BJ (cell line): ENCODE measurements at regions of chr11 and their contacts with region 1.

Region 1: GRCh38 chr11:47373876-47374720 is 4.2 kb downstream of the SPI1 start:
- DNase-seq: no peak
- H3K4me3 ChIP-seq: no peak overlapping the region
- H3K27me3 ChIP-seq: no peaks in the 10 kb centered on the region
- CTCF ChIP-seq: peak; percentile 97

Region 2: DNA sequence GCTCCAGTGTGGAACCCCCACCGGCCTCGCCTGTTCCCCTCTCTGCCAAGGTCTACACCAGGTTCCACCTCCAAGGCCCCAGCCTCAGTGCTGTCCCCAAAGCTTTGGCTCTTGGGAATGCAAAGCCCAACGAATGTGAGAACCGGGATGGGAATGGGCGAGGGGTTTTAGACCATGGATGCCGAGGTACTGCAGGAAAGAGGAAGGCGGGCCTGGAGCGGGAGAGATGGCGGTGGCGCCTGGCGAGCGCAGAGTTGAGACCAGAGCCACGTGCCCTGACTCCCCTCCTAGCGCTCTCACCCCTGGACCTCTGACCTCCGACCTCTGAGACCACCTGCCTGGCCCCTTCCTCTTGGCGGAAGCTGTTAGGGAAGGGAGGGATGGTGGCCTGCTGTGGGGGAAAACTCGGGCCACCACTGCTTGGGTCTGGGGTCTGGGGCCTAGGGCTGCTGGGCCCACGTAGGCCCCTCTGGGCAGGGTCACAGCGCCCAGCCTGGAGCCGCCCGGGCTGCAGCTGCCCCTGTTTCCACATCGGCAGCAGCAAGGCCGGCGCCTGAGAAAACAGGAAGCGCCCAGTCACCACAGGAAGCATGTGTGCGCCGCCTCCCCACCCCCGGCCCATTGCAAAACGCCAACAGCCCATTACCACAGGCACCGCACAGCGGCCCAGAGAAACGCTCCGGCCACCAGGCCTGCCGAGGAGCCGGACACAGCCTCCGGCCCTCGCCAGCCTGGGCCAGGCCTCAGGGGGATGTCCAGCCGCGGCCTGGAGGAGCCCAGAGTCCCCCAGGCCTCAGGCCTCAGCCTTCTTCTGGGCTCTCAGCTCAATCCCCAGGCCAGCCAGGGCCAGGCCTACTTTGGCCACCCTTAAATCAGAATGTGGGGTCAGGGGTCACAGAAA is 20.5 kb after region 1 on chr11:
- CTCF ChIA-PET with region 1: interaction called, 32 read pairs
- POLR2A ChIA-PET with region 1: no interaction called
- DNase-seq: no peak
- H3K4me3 ChIP-seq: no peak overlapping the region
- H3K27me3 ChIP-seq: no peaks in the 10 kb centered on the region
- CTCF ChIP-seq: no peak

Region 3: DNA sequence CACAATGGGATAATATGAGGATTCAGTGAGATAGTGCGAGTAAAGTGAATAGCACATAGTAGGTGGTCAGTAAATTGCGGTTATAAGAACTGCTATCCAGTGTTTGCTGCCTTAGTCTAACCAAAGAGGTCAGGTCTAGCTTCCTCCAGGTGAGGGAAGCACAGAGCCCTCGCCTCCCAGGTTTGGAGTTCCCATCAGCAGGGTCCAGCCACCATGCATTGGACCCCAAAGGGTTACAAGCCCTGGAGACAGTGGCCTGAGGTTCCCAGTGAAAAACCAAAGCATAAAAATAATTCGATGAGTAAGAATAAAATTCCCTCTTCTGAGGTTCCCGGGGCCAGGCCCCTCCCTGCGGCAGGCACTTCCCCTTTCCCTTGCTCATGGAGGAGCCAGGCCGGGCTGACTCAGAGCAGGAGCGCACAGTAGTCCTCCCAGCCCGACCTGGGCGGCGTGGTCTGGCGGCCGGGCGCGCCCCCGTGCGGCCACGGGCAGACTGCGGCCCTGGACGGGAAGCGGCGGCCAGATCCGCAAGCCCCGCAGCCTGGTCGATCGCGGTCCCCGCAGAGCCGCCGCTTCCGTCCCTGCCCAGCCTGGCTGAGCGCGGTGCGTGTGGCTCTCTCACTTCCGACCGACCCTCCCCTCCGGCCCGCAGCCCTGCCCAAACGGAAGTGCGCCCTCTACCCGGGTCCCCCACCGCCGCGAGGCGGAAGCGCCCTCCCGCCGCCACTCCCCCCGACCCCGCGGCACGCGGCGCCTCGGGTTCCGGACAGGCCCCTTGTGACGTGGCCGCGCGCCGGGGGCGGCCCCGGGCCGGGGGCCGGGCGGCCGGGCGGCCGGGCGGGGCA is 33.9 kb after region 1 on chr11 and contains the start of gene SLC39A13:
- CTCF ChIA-PET with region 1: interaction called, 37 read pairs
- POLR2A ChIA-PET with region 1: no interaction called
- DNase-seq: peak; percentile 75
- H3K4me3 ChIP-seq: peak within 1 kb of the TSS; percentile 95
- H3K27me3 ChIP-seq: no peaks in the 10 kb centered on the region
- CTCF ChIP-seq: peak; percentile 45
- polyA plus RNA-seq, gene SLC39A13: 59.7 and 108 TPM in 2 replicates

Region 4: GRCh38 chr11:47454180-47454644 is 80.1 kb after region 1 on chr11:
- CTCF ChIA-PET with region 1: interaction called, 52 read pairs
- POLR2A ChIA-PET with region 1: no interaction called
- DNase-seq: peak; percentile 30
- H3K4me3 ChIP-seq: no peak overlapping the region
- H3K27me3 ChIP-seq: no peaks in the 10 kb centered on the region
- CTCF ChIP-seq: peak; percentile 85